ENCODE measurements at regions of chr12 and their contacts with region 1.

Region 1: DNA sequence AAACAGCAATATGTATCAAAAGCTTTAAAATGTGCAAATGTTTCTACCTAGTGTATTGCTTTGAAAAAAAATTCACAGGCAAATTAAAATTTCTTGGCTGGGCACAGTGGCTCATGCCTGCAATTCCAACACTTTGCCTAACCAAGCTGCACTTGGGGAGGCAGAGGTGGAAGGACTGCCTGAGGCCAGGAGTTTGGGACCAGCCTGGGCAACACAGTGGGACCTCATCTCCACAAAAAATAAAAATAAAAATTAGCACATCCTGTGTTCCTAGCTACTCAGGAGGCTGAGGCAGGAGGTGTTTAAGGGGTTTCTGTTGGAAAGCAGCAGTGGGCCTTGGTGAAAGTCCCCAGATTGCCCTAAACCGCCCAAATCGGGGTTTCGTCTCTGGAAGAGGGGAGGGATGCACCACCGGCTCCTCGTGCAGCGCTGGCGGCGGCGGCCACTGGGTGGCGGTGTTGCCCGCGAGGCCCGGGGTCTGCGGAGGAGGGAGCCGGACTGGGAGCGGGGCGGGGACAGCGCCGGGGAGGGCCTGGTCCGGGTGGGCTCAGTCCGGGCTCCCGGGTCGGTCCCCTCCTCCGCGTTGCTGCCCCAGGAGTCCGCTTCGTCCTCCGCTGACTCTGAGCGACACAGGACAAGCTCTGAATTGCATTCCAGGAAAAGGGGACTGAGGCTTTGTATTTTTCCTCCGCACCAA is 265.6 kb downstream of the AACS start:
- DNase-seq: no peak
- H3K4me3 ChIP-seq: no peak overlapping the region
- H3K4me3 Mint-ChIP-seq: no peak overlapping the region
- H3K27ac ChIP-seq: no peak overlapping the region
- H3K27ac Mint-ChIP-seq: no peak overlapping the region
- H3K4me1 ChIP-seq: no peaks in the 10 kb centered on the region
- H3K4me1 Mint-ChIP-seq: no peaks in the 10 kb centered on the region
- H3K27me3 ChIP-seq: peaks cover 0 to 23% of the 10 kb centered on the region in 2 donors
- H3K27me3 Mint-ChIP-seq: peaks cover 16 to 40% (median 25%) of the 10 kb centered on the region in 3 donors
- CTCF ChIP-seq: peak; percentile 74

Region 2: GRCh38 chr12:125402874-125403789 is 72.3 kb after region 1 on chr12:
- intact Hi-C with region 1: loop called in 1 of 2 experiments (anchors 5 kb)
- DNase-seq: peak in 2 of 3 donors; percentile 6 to 9
- H3K4me3 ChIP-seq: no peak overlapping the region
- H3K4me3 Mint-ChIP-seq: no peak overlapping the region
- H3K27ac ChIP-seq: no peak overlapping the region
- H3K27ac Mint-ChIP-seq: no peak overlapping the region
- H3K4me1 ChIP-seq: no peaks in the 10 kb centered on the region
- H3K4me1 Mint-ChIP-seq: no peaks in the 10 kb centered on the region
- H3K27me3 ChIP-seq: peaks cover 0 to 3% of the 10 kb centered on the region in 2 donors
- H3K27me3 Mint-ChIP-seq: peaks cover 1 to 3% (median 2%) of the 10 kb centered on the region in 3 donors
- CTCF ChIP-seq: peak; percentile 69